ENCODE measurements at regions of chr14 and their contacts with region 1.

Region 1: GRCh38 chr14:68704736-68705705 is 87.8 kb downstream of the ZFP36L1 start:
- DNase-seq: peak in 1 of 2 donors; percentile 32
- H3K4me3 ChIP-seq: no peak overlapping the region
- H3K27ac ChIP-seq: no peak overlapping the region
- H3K4me1 ChIP-seq: peaks cover 0 to 13% (median 3%) of the 10 kb centered on the region in 4 donors
- H3K27me3 ChIP-seq: no peaks in the 10 kb centered on the region
- CTCF ChIP-seq: no peak

Region 2: GRCh38 chr14:68607081-68607886 is 97.7 kb before region 1 on chr14:
- intact Hi-C with region 1: no loop called
- DNase-seq: peak; percentile 45 to 69
- H3K4me3 ChIP-seq: no peak overlapping the region
- H3K27ac ChIP-seq: peak overlapping the region; percentile 1 to 60
- H3K4me1 ChIP-seq: peaks cover 3 to 24% (median 16%) of the 10 kb centered on the region in 4 donors
- H3K27me3 ChIP-seq: no peaks in the 10 kb centered on the region
- CTCF ChIP-seq: no peak

Region 3: GRCh38 chr14:68766299-68767230 is 61.5 kb after region 1 on chr14:
- intact Hi-C with region 1: loop called (anchors 5 kb)
- DNase-seq: no peak
- H3K4me3 ChIP-seq: no peak overlapping the region
- H3K27ac ChIP-seq: no peak overlapping the region
- H3K4me1 ChIP-seq: peaks cover 0 to 17% (median 9%) of the 10 kb centered on the region in 4 donors
- H3K27me3 ChIP-seq: no peaks in the 10 kb centered on the region
- CTCF ChIP-seq: no peak

Measured in tibial artery (tissue), 4 donors.